Activated CD4-positive, alpha-beta memory T cell treated with anti-CD3 and anti-CD28 coated beads, Interleukin-2, amount 10 ng/mL, durations not matched to agents 7 days and 5 days (primary cell): ENCODE measurements at regions of chr1 and their contacts with region 1.

Region 1: DNA sequence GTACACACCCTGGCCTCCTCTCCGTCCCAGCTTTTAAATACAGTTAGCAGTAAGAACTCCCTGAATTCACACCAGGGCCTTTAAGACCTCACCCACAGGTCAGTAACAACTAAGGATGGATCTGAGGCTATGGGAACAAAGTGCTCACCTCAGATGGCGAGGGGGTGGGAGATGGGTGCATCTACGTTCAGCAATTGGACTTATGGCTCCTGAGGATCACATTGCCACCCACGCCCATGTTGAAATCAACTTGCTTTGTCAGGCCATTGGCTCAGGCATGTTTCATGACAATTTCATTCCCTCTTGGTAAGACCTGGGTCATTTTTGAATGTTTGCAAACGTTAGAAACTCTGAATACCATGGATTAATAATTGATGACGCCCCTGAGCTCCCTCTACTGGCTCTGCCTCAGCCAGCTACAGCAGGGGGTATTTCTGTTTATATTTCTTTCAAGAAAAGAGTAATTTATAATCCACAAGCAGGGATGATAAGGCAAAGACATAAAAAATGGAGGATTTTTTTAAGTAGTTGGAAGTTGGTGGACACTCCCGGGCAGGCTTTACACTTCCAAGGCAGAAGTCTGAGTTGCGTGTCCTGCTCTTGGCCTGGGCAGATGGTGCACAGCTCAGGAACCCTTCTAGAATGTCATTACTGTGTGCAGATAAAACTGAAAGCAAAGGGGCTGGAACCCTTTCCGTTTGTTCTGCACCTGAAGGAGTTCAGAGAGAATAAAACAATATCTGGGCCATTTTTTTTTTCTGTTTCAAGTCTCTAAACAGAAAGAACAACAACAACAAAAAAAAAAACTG is 13.7 kb upstream of the LBR start:
- DNase-seq: no peak
- H3K4me3 Mint-ChIP-seq: peak overlapping the region; percentile 38
- H3K27ac Mint-ChIP-seq: peak overlapping the region; percentile 71
- H3K4me1 Mint-ChIP-seq: peaks cover 56% of the 10 kb centered on the region
- H3K27me3 Mint-ChIP-seq: no peaks in the 10 kb centered on the region

Region 2: DNA sequence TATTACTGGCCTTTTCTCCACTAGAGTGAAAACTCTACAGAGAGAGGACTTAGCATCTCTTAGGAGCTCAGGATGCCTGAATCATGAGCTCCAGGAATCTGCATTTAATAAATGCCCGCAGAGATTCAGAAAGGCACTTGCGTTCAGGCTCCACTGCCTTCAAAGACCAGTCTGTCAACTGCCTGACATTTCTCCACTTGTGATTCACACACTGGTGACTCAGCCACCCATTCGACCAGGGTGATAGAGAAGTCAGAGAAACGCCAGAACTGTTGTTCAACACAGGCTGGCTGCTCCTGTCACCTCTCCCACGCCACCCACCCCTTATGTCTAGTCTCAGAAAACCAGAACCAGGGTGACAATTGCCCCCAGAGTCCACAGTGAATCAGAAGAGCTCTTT is 13.2 kb after region 1 on chr1:
- CTCF ChIA-PET with region 1: interaction called, 39 read pairs
- POLR2A ChIA-PET with region 1: interaction called, 75 read pairs
- DNase-seq: peak; percentile 62
- H3K4me3 Mint-ChIP-seq: no peak overlapping the region
- H3K27ac Mint-ChIP-seq: peak overlapping the region; percentile 77
- H3K4me1 Mint-ChIP-seq: peaks cover 50% of the 10 kb centered on the region
- H3K27me3 Mint-ChIP-seq: no peaks in the 10 kb centered on the region

Region 3: GRCh38 chr1:225460737-225461562 is 19.4 kb after region 1 on chr1:
- CTCF ChIA-PET with region 1: interaction called, 39 read pairs
- POLR2A ChIA-PET with region 1: interaction called, 75 read pairs
- DNase-seq: peak; percentile 69
- H3K4me3 Mint-ChIP-seq: no peak overlapping the region
- H3K27ac Mint-ChIP-seq: peak overlapping the region; percentile 77
- H3K4me1 Mint-ChIP-seq: peaks cover 70% of the 10 kb centered on the region
- H3K27me3 Mint-ChIP-seq: no peaks in the 10 kb centered on the region

Region 4: DNA sequence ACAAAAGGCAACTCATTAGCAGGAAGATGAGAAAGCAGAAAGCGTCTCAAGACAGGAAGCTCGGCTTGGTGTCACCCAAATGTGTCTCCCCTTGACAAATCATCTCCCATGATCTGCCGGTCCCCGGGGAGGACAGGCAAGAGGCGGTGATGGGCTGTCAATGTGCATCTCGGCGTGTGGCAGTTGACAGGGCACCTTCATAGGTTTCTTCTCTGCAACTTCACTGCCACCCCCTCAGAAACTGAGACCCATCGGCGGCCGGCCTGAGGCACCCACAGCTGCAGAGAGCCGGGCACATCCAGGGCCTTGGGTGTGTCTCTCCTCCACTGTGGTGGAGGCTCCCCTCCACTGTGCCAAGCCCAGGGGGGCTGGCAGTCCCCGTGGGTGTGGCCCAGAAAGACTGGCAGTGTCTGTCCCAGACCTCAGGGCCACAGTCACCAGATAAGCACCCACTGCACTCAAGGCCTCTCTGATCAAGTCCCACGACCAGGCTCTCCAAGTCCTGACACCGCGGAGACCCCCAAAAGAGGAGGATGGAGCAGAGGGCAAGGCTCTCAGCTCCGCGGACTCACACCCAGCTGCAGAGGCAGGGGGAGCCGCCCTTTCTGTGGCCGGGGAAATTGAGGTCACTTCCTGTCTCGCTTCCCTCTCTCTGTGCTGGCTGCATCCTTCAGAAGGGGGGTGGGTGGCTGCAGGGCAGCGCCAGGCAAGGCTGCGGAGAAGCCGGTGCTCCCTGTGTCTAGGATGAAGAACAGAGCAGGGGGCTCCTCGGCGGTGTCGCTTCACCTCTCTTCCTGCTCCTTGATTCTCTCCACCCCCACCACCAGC is 25.9 kb after region 1 on chr1:
- CTCF ChIA-PET with region 1: interaction called, 39 read pairs
- POLR2A ChIA-PET with region 1: interaction called, 300 read pairs
- DNase-seq: peak; percentile 91
- H3K4me3 Mint-ChIP-seq: peak overlapping the region; percentile 91
- H3K27ac Mint-ChIP-seq: peak overlapping the region; percentile 99
- H3K4me1 Mint-ChIP-seq: peaks cover 64% of the 10 kb centered on the region
- H3K27me3 Mint-ChIP-seq: no peaks in the 10 kb centered on the region

Region 5: DNA sequence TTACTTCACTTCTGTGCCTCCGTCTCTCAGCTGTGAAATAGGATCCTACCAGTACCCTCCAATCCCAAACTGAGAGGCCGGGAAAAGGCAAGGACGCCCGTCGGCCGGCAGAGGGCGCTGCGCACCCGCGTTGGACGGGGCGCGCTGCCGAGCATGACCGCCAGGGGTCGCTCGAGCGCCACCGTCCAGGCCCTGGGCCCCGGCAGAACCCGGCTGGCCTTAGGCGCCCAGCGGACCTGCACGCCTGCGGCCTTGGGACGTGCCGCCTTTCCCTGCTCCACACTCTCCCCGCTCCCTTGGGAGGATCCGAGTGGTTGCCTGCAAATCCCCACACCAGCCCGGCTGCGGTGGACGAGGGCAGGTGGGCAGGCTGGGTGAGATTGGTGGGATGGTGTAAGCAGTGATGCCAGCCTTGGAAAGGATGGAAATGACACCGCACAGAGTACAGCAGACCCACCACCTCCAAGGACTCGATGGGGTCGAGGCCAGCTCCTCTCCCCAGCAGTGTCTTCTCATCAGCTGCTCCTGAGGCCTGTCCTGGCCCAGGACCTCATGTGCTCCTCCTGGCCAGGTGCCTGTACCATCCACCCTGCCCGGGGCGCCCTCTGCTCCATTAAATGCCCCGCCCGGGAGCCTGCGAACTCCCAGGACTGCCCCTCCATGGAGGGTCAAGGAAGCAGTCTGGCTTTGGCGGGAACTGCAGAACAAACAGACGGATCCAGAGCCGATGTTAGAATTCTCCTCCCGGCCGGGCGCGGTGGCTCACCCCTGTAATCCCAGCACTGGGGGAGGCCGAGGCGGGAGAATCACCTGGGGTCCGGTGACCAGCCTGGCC is 33.7 kb after region 1 on chr1:
- CTCF ChIA-PET with region 1: interaction called, 20 read pairs
- POLR2A ChIA-PET with region 1: interaction called, 300 read pairs
- DNase-seq: peak; percentile 77
- H3K4me3 Mint-ChIP-seq: no peak overlapping the region
- H3K27ac Mint-ChIP-seq: no peak overlapping the region
- H3K4me1 Mint-ChIP-seq: peaks cover 45% of the 10 kb centered on the region
- H3K27me3 Mint-ChIP-seq: peaks cover 2% of the 10 kb centered on the region

Region 6: DNA sequence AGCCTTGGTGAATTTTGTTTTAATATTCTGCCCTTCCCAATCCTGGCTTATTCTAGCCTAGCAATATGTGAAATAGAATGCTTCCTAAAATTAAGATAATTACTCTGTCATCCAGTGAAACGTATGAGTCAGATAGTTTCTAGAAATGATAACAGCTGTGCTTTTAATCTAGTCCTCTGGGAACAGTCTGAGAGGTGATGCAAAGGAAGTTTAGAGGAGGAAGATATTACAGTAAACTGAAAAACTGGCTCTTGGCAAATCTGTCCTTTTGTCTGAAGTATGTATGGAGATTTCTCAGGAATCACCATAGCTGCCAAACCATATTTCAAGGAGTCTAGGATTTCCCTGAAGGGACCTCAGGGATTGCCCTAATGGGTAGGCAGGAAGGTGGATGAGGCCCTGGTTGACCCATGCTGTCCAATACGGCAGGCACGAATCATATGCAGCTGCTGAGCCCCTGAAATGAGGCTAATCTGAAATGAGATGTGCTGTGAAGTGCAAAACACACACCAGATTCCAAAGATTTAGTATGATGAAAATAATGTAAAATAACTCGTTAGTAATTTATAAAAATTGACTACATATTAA is 57.1 kb after region 1 on chr1:
- CTCF ChIA-PET with region 1: no interaction called
- POLR2A ChIA-PET with region 1: no interaction called
- DNase-seq: no peak
- H3K4me3 Mint-ChIP-seq: no peak overlapping the region
- H3K27ac Mint-ChIP-seq: no peak overlapping the region
- H3K4me1 Mint-ChIP-seq: no peaks in the 10 kb centered on the region
- H3K27me3 Mint-ChIP-seq: peaks cover 28% of the 10 kb centered on the region

Region 7: GRCh38 chr1:225508538-225509375 is 67.2 kb after region 1 on chr1:
- CTCF ChIA-PET with region 1: no interaction called
- POLR2A ChIA-PET with region 1: no interaction called
- DNase-seq: no peak
- H3K4me3 Mint-ChIP-seq: no peak overlapping the region
- H3K27ac Mint-ChIP-seq: no peak overlapping the region
- H3K4me1 Mint-ChIP-seq: no peaks in the 10 kb centered on the region
- H3K27me3 Mint-ChIP-seq: peaks cover 17% of the 10 kb centered on the region